Activated B cell treated with CpG ODN at 0.5 μM for 24 hours (primary cell): ENCODE measurements at regions of chr10 and their contacts with region 1.

Region 1: GRCh38 chr10:133261726-133262325 is 14.8 kb downstream of the ADAM8 start:
- DNase-seq: peak; percentile 80
- ATAC-seq: peak; percentile 65
- H3K4me3 Mint-ChIP-seq: peak overlapping the region; percentile 79
- H3K27ac Mint-ChIP-seq: no peak overlapping the region
- H3K4me1 Mint-ChIP-seq: peaks cover 80% of the 10 kb centered on the region
- H3K27me3 Mint-ChIP-seq: no peaks in the 10 kb centered on the region
- CTCF ChIP-seq: no peak

Region 2: DNA sequence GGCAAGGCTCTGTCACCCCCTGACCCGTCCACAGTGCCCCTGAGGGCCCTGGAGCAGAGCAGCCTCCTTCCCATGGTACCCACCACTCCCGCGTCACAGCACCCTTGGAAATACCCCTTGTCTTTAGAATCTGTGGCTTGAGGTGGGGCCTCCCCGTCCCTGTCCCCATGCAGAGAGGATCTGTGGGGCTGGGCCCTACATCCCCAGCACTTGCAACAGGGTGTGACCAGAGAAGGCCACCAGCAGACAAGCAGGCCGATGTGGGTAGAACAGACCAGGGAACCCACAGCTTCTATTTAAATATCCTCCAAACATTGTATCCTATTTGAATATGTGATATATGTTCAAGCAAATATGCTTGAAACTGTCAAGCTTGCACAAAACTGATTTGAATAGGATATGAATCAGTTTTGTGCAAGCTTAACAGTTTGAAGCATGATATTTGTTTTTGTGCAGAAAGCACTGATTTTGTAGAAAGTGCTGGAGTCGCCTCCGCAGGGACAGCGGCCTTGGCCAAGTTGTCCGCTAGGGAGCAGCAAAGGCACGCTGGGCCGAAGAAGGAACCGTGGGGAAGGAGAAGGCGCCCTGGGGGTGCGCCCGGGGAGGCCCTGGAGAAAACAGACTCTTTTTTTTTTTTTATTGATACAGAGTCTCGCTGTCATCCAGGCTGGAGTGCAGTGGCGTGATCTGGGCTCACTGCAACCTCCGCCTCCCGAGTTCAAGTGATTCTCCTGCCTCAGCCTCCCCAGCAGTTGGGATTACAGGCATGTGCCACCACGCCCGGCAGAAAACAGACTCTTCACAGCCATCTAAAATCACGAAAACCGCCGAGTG is 321.7 kb before region 1 on chr10:
- CTCF ChIA-PET with region 1: no interaction called
- POLR2A ChIA-PET with region 1: no interaction called
- intact Hi-C with region 1: loop called (anchors 10 kb)
- DNase-seq: no peak
- ATAC-seq: peak; percentile 69
- H3K4me3 Mint-ChIP-seq: peak overlapping the region; percentile 55
- H3K27ac Mint-ChIP-seq: peak overlapping the region; percentile 41
- H3K4me1 Mint-ChIP-seq: peaks cover 37% of the 10 kb centered on the region
- H3K27me3 Mint-ChIP-seq: peaks cover 38% of the 10 kb centered on the region
- CTCF ChIP-seq: no peak

Region 3: DNA sequence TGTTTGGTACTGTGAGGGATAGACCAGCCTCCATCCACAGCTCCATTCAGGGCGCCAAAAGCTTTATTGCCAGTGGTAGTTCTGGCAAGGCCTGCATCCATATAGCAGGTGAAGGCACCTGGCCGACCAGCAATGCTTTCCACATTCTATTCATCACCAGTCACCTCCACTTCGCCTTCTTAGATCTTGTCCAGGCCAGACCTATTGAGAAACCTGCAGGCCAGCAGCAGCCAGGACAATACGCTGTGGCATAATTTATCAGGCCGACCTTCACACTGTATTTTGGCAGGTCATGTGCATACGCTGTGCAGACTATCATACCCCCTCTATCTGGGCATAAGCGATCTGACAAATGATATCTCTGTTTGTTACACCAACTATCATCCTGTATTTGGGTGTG is 117.1 kb before region 1 on chr10:
- CTCF ChIA-PET with region 1: interaction called, 5 read pairs
- POLR2A ChIA-PET with region 1: interaction called, 7 read pairs
- intact Hi-C with region 1: loop called (anchors 1 kb)
- DNase-seq: no peak
- ATAC-seq: no peak
- H3K4me3 Mint-ChIP-seq: no peak overlapping the region
- H3K27ac Mint-ChIP-seq: no peak overlapping the region
- H3K4me1 Mint-ChIP-seq: peaks cover 7% of the 10 kb centered on the region
- H3K27me3 Mint-ChIP-seq: peaks cover 49% of the 10 kb centered on the region
- CTCF ChIP-seq: no peak

Region 4: DNA sequence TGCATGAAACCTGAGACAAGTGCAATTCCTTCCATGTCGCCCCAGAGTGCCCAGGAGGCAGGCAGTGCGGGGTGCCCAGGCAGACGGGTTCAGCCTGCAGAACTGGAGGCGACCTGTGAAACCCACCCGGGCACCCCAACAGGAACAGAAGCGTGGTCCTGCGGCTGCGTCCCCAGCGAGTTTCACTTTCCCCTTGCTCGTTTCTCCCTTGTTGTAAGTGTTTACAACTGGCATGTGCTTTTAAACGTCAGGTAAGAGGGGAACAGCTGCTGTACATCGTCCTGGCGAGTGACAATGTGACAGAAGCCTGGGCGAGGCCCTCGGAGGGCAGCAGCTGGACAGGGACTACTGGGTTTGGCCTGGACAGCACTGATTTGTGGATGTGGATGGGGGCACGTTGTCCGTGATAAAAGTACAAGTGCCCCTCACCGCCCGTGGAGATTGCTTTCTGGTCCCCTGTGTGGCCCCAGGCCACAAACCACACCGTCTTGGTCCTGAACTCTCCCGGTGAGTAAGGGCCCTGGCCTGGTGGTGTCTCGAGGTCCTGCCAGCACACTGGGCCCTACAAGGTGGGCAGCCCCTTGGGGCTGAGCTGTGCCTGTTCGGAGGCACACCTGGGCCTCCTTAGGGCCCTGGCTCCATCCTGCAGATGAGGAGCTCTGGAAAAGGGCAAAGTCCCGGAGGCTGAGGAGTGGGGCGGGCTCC is 20.2 kb before region 1 on chr10:
- CTCF ChIA-PET with region 1: interaction called, 4 read pairs
- POLR2A ChIA-PET with region 1: interaction called, 5 read pairs
- intact Hi-C with region 1: loop called (anchors 2 kb)
- DNase-seq: no peak
- ATAC-seq: peak; percentile 45
- H3K4me3 Mint-ChIP-seq: peak overlapping the region; percentile 81
- H3K27ac Mint-ChIP-seq: peak overlapping the region; percentile 12
- H3K4me1 Mint-ChIP-seq: peaks cover 37% of the 10 kb centered on the region
- H3K27me3 Mint-ChIP-seq: peaks cover 14% of the 10 kb centered on the region
- CTCF ChIP-seq: no peak

Region 5: DNA sequence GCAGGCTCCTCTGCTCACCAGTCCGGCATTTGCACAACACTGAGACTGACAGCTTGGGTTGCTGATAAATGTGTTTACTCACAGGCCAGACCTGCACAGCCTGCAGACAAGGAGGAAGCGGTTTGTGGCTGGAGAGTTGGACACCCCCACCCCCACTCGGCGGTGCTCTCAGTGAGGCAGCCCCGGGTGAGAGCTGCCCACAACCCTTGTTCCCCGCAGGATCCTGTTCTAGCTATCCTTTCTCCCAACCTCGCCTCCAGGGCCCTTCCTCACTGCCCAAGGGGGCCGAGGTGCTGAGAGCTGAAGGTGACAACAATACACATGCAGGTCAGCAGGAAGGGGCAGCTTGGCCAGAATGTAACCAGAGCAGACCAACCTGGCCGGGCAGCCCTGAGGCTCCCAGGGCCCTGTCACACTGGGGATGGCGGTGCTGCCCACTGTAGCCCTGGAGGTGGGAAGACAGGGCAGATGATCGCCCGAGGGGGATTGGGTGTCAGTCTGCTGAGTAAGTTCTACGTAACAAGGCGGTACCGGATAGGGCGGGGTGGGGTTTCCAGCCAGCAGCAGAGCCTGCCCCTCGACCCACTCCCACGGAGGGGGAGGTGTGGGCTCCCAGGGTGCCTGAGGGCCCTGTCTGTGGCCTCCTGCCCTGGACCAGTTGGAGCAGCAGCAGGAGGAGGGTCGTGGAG is 16.9 kb after region 1 on chr10:
- CTCF ChIA-PET with region 1: interaction called, 26 read pairs
- POLR2A ChIA-PET with region 1: interaction called, 85 read pairs
- intact Hi-C with region 1: loop called (anchors 1 kb)
- DNase-seq: peak; percentile 44
- ATAC-seq: peak; percentile 10
- H3K4me3 Mint-ChIP-seq: peak overlapping the region; percentile 76
- H3K27ac Mint-ChIP-seq: peak overlapping the region; percentile 80
- H3K4me1 Mint-ChIP-seq: peaks cover 38% of the 10 kb centered on the region
- H3K27me3 Mint-ChIP-seq: no peaks in the 10 kb centered on the region
- CTCF ChIP-seq: no peak

Region 6: DNA sequence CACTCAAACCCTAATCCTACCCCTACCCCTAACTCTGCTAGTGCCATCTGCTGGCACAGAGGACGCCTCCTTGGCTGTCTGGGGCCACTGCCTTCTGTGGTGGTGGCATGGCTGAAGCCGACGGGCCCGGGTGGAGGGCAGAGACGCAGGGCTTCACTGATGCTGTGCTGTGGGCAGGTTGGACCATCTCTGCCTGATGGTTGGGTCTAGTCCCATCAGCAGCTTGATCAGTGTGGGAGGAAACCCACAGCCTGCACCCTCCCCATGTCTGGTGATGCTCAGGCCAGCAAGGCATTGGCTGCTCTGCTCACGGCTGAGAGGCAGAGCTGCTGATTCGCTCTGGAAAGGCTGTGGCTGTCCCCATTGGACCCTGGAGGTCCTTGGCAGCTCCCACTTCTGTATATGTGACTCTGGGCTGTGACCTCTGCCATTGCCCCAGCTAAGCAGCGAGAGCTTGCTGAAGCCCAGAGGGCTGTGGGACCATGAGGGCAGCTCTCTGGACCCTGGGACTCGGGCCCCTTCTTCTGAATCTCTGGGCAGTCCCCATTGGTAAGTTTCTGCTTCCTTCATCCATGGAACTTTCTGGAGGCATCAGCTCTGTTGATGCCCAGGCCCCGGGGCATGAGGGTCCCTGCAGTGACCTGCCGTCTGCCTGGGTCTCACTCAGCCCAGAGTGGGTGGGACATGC is 191.8 kb after region 1 on chr10 and contains the start of gene SCART1:
- CTCF ChIA-PET with region 1: no interaction called
- POLR2A ChIA-PET with region 1: no interaction called
- intact Hi-C with region 1: no loop called
- DNase-seq: no peak
- ATAC-seq: no peak
- H3K4me3 Mint-ChIP-seq: no peak within 1 kb of the TSS
- H3K27ac Mint-ChIP-seq: no peak within 1 kb of the TSS
- H3K4me1 Mint-ChIP-seq: no peaks in the 10 kb centered on the region
- H3K27me3 Mint-ChIP-seq: no peaks in the 10 kb centered on the region
- CTCF ChIP-seq: no peak
- total RNA-seq, gene SCART1: 2.8 TPM in 2 replicates